AG04449 (cell line): ENCODE measurements at regions of chr19 and their contacts with region 1.

Region 1: DNA sequence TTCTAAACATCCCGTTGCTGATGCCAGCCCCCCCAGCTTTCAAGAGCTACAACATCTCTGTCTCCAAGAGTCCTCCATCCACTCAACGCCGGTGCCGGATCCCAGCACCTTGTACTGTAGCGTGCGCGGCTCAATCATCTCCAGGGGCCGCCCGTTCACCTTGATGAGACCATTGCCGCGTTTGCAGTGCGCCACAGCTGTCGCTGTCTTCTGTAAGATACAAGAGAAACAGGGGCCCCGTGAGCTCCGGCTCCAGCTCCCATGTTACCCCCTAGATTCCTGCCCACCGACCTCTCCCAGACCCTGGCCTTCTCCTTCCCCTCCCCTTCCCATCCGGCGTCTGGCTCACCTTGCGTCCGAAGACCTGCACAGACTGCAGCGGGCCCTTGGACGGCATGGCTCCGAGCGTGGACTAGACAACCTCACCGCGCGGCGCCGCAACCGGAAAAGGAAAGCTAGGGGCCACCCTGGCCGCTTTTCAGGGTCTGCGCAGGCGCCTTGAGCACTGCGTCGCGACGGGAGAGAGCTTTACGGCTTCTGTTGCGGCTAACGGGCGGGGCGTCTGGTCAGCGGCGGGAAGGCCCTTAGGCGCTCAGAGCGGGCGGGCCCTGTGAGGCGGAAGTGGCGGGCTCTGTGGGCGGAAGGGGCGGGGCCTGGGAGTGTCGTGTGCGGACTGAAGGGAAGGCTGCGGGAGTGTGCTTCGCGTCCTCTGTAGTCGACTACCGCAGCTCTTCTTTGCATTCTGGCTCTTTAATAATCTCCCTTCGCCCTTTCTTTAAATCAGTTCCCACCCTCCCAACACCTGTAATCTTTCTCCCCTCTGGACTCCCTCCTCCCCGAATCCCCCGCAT is at the start of gene RPS16:
- DNase-seq: no peak
- H3K4me3 ChIP-seq: peak within 1 kb of the TSS; percentile 100
- CTCF ChIP-seq: no peak

Region 2: DNA sequence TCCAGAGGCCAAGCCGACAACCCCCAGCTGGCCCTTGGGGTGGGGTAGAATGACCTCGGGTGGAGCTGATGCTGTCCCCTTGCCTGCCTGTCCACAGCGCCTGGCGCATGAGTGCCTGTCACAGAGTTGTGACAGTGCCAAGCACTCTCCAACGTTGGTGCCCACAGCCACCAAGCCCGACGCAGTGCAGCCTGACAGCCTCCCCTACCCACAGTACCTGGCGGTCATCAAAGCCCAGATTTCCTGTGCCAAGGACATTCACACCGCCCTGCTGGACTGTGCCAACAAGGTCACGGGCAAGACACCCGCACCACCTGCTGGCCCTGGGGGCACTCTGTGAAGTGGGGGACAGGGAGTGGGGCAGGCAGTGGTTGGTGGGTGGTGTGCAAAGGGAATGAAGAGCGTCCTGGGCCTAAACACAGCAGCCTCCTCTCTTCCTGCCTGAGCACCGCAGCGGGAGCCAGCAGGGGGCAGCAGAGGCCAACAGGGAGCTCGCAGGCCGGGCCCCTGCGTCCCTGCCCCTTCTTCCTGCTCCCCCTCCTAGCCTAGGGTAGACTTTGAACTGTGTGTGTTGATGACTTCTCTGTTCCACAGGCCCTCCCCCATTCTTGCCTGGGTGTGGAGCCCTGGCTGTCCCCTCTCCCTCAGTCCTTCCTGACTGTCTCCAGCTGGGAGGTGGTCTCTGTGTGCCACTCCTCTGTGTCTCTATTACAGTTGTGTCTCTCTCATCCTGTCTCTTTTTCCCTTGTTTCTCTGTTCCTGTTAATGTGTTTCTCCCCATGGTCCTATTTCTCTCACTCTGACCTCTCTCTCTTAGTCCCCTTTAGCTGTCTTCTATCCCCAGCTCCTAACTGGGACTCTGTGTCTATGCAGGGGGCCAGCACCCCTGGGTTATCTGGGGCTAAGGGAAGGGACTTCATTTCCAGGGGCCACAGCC is 38.1 kb before region 1 on chr19:
- CTCF ChIA-PET with region 1: interaction called, 11 read pairs
- POLR2A ChIA-PET with region 1: interaction called, 20 read pairs
- DNase-seq: no peak
- H3K4me3 ChIP-seq: no peak overlapping the region
- CTCF ChIP-seq: peak; percentile 99

Region 3: GRCh38 chr19:39412100-39412866 is 23.4 kb before region 1 on chr19 and contains the start of gene PLEKHG2:
- CTCF ChIA-PET with region 1: interaction called, 10 read pairs
- POLR2A ChIA-PET with region 1: interaction called, 31 read pairs
- DNase-seq: peak; percentile 99
- H3K4me3 ChIP-seq: peak within 1 kb of the TSS; percentile 87
- CTCF ChIP-seq: peak; percentile 84

Region 4: GRCh38 chr19:39532233-39533002 is 96.7 kb after region 1 on chr19 and contains the start of gene EID2B:
- CTCF ChIA-PET with region 1: interaction called, 129 read pairs
- POLR2A ChIA-PET with region 1: interaction called, 5 read pairs
- DNase-seq: peak; percentile 56
- H3K4me3 ChIP-seq: peak within 1 kb of the TSS; percentile 83
- CTCF ChIP-seq: peak; percentile 97

Region 5: GRCh38 chr19:39671738-39672363 is 236.1 kb after region 1 on chr19:
- CTCF ChIA-PET with region 1: interaction called, 23 read pairs
- POLR2A ChIA-PET with region 1: no interaction called
- DNase-seq: no peak
- H3K4me3 ChIP-seq: no peak overlapping the region
- CTCF ChIP-seq: peak; percentile 39